Naive thymus-derived CD8-positive, alpha-beta T cell (primary cell): ENCODE measurements at regions of chr6 and their contacts with region 1.

Region 1: GRCh38 chr6:35731736-35732532 is 4.9 kb upstream of the ARMC12 start:
- DNase-seq: peak; percentile 85 to 97 (median 95)
- ATAC-seq: peak; percentile 48 to 54
- H3K4me3 Mint-ChIP-seq: peak overlapping the region; percentile 67 to 93 (median 90)
- H3K27ac Mint-ChIP-seq: peak overlapping the region; percentile 91 to 99 (median 97)
- H3K4me1 Mint-ChIP-seq: peaks cover 42 to 86% (median 84%) of the 10 kb centered on the region in 4 donors
- H3K27me3 Mint-ChIP-seq: no peaks in the 10 kb centered on the region

Region 2: DNA sequence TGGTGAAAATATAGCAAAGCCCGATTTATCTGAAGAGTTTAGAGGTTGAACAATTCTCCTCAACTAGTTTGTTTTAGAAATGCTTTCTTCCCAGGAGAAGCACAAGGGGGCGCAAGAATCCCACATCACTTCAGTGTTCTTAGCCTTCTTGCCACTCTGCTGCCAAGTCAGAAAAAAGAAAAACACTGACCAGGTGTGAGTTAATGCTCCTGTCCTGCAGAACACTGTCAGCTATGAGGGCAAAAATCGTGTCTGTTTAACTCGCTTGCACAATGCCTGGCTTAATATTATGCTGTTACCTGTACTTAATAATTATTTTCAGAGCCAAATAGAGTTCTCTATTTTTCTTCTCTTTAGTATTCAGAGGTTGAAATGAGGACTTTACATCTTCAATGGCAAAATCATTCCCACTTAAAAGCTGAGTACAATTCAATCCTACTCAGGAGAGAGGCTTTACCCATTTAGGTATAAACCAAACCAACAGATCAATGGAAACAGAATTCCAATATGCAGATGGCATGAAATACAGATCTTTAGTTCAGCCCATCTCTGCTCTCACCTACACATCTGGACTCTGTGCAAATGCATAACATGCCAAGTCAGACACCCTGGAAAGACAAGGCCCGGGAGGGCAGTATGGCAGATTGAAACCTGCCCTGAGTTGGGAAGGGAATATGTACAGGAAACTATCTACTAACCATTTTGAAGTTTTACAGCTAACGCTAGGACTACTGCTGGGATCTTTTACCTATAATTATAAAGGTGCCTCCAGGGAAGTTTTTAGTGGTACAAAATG is 147.8 kb before region 1 on chr6:
- POLR2A ChIA-PET with region 1: interaction called, 12 read pairs
- DNase-seq: peak; percentile 58 to 85 (median 74)
- ATAC-seq: peak; percentile 66 to 69
- H3K4me3 Mint-ChIP-seq: peak overlapping the region in 7 of 10 donors; percentile 30 to 65 (median 57)
- H3K27ac Mint-ChIP-seq: peak overlapping the region; percentile 87 to 95 (median 90)
- H3K4me1 Mint-ChIP-seq: peaks cover 30 to 77% (median 60%) of the 10 kb centered on the region in 4 donors
- H3K27me3 Mint-ChIP-seq: no peaks in the 10 kb centered on the region

Region 3: GRCh38 chr6:35601331-35602132 is 130.4 kb before region 1 on chr6:
- POLR2A ChIA-PET with region 1: interaction called, 61 read pairs
- DNase-seq: peak; percentile 30 to 96 (median 82)
- ATAC-seq: peak; percentile 81 to 88
- H3K4me3 Mint-ChIP-seq: peak overlapping the region; percentile 76 to 98 (median 82)
- H3K27ac Mint-ChIP-seq: peak overlapping the region; percentile 87 to 100 (median 94)
- H3K4me1 Mint-ChIP-seq: peaks cover 33 to 85% (median 77%) of the 10 kb centered on the region in 4 donors
- H3K27me3 Mint-ChIP-seq: no peaks in the 10 kb centered on the region

Region 4: DNA sequence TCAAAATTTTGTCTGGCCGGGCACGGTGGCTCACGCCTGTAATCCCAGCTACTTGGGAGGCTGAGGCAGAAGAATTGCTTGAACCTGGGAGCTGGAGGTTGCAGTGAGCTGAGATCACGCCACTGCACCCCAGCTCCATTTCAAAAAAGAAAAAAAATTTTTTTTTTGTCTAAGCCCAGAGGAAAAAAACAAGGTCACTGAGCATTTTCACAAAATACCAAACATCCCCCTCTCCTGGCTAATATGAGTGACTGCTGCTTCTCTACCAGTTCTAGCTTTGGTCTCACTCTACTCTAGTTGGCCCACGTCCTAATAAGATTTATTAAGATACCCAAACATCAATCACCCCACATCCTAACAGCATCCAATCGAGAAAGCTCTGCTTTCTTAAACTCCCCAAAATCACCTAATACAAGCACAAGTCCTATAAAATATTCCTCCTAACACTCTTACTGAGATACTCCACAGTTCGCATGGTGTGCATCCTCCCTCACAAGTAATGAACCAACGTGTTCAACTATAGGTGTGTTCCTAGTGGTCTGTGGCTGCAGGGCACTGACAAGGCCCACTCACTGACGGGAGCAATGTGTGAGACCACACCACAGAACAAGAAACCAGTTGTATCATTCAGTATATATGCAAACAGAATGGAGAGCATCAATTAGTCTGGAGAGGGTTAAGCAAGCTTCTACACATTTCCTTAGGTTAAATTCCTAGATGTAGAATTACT is 107.4 kb before region 1 on chr6:
- POLR2A ChIA-PET with region 1: interaction called, 23 read pairs
- DNase-seq: peak in 4 of 10 donors; percentile 29 to 72 (median 66)
- ATAC-seq: peak; percentile 77 to 87
- H3K4me3 Mint-ChIP-seq: peak overlapping the region in 8 of 10 donors; percentile 7 to 52 (median 34)
- H3K27ac Mint-ChIP-seq: peak overlapping the region; percentile 76 to 93 (median 84)
- H3K4me1 Mint-ChIP-seq: peaks cover 15 to 61% (median 49%) of the 10 kb centered on the region in 4 donors
- H3K27me3 Mint-ChIP-seq: no peaks in the 10 kb centered on the region

Region 5: DNA sequence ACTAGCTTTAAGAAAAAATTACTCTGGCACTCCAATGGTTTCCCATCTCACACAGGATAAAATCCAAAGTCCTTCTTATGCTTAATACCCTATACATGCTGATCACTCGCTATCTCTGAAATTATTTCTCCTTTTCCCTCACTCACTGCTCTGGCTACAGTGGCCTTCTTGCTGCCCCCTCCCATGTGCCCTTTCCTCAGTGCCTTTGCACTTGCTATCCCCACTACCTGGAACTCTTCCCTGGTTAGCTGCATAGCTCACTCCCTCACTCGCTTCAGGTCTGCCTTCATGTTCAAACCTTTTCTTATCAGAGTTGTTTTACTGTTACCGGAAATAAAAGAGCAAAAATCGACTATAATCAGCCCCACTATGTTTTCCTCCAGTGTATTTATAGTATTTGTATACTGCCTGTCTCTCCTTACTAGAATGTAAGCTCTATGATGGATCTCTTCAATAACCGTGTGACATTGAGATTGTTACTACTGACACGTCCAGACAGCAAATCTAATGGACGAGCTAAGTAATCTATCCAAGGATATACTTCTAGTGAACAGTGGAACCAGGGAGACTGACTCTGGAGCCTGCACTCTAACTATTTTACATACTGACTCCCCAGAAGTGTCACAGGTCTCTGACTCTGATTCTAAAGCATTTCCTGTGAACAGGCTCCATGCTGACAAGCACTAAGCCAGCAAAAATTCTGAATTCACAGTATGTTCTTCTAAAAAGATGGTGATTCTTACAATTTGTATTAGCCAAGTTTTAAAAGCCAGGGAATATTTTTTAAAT is 68.3 kb before region 1 on chr6:
- POLR2A ChIA-PET with region 1: interaction called, 17 read pairs
- DNase-seq: peak in 2 of 10 donors; percentile 30 to 38
- ATAC-seq: peak; percentile 74 to 84
- H3K4me3 Mint-ChIP-seq: no peak overlapping the region
- H3K27ac Mint-ChIP-seq: no peak overlapping the region
- H3K4me1 Mint-ChIP-seq: peaks cover 3 to 35% (median 17%) of the 10 kb centered on the region in 4 donors
- H3K27me3 Mint-ChIP-seq: no peaks in the 10 kb centered on the region

Region 6: DNA sequence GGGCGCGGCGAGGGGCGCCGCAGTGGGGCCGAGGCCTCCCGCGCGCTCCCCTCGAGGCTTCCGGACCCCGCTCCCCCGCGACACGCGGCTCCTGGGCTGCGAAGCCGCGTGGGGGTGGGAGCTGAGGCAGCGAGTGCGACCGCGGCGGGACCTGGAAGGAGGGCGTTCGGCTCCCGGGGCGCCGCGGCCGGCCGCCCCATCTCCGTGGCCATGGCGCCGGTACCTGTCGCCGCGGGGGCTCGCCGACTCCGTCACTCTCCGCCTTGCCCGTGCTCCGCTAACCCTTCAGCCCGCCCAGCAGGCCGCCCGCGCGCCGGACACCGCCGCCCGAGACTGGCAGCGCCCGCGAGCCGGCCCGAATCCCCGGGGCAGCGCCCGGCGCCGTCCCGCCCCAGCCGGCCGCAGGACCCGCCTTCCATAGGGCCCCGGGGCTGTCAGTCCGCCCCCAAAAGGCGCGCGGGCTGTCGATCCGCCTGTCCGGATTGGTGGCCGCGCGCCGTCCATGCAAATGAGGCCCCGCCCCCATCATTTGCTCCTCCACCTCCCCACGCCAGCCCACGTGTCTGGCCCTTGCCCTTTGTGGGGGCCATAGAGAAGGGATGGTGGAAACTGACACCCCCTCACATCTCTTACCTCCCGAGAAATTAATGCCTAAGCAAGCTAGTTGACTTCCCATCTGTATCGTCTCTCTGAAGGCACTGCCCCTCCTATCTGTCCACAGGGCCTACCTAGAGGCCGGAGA is 43.2 kb before region 1 on chr6 and contains the start of gene FKBP5:
- POLR2A ChIA-PET with region 1: interaction called, 36 read pairs
- DNase-seq: peak; percentile 78 to 92 (median 84)
- ATAC-seq: peak; percentile 86 to 89
- H3K4me3 Mint-ChIP-seq: peak within 1 kb of the TSS; percentile 97 to 100 (median 98)
- H3K27ac Mint-ChIP-seq: peak within 1 kb of the TSS; percentile 84 to 99 (median 96)
- H3K4me1 Mint-ChIP-seq: peaks cover 9 to 16% (median 13%) of the 10 kb centered on the region in 4 donors
- H3K27me3 Mint-ChIP-seq: no peaks in the 10 kb centered on the region
- polyA plus RNA-seq, gene FKBP5: 108 to 297 (median 154) TPM

Region 7: DNA sequence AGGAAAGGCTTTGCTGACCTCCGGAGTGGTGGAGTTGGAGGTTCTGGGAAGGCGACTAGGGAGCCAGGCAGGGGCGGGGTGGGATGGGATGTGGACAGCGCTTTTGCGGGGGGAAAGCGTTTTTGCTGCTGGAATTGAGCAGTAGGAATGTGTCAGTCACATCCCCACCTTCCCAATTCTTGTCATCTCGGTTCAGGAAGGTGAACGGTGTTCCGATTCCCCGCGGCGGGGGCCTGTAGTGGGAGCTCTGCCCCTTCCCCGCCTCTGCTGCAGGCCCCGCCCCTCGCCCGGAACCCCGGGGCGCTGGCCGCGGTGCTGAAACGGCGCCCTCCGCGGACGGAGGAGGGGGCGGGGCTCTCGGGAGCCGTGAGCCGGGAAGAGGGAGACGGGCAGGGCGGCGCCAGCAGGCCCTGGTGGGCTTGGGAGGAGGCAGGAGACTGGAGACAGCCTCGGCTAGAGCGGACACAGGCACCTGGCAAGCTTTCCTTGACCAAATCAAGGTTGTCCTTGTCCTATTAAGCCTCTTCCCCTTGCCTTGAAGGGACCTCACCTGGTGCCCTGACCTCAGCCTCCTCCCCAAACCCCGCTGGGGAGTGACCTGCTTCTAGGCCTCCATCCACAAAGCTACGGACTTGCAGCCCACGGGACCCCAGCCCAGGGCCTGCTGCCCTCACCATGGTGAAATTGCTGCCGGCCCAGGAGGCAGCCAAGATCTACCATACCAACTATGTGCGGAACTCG is 73.2 kb after region 1 on chr6 and contains the start of gene LHFPL5:
- POLR2A ChIA-PET with region 1: no interaction called
- DNase-seq: peak in 8 of 10 donors; percentile 20 to 59 (median 50)
- ATAC-seq: peak; percentile 69 to 83
- H3K4me3 Mint-ChIP-seq: peak within 1 kb of the TSS in 3 of 10 donors; percentile 20 to 54 (median 43)
- H3K27ac Mint-ChIP-seq: no peak within 1 kb of the TSS
- H3K4me1 Mint-ChIP-seq: peaks cover 2 to 6% (median 2%) of the 10 kb centered on the region in 4 donors
- H3K27me3 Mint-ChIP-seq: peaks cover 16 to 46% (median 23%) of the 10 kb centered on the region in 5 donors
- polyA plus RNA-seq, gene LHFPL5: not detected